Activated CD4-positive, alpha-beta T cell treated with anti-CD3 and anti-CD28 coated beads for 36 hours (primary cell): ENCODE measurements at regions of chr2 and their contacts with region 1.

Region 1: DNA sequence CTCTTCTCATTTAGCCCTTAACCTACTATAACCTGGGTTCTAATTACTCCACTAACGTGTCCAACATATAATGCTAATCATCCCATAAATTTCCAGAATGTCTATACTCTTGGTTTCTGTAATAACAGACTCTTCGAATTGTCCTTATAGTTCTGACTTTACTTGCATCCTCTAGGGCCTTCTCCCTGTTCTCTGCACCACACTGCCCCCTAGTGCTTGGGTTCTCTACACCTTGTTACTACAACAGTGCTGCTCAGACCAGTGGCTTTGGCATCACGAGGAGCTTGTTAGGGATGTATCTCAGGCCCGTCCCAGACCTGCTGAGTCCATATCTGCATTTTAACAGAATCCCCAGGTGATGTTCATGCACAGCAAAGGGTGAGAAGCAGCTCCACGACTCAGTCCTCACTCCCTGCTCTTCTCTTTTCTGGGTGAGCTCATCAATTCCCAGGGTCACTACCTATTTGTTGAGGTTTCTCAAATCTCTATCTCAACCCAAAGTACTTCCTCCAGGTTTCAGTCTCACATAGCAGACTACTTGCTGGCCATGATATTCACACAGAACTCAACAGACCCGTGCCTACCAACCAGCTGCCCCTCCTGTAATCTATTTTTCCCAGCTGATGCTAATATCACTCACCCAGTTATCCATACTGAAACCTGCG is 14.5 kb upstream of the DDX1 start:
- DNase-seq: peak; percentile 96
- ATAC-seq: peak; percentile 99
- H3K4me3 Mint-ChIP-seq: no peak overlapping the region
- H3K27ac Mint-ChIP-seq: no peak overlapping the region
- H3K4me1 Mint-ChIP-seq: no peaks in the 10 kb centered on the region
- H3K27me3 Mint-ChIP-seq: no peaks in the 10 kb centered on the region

Region 2: GRCh38 chr2:14642499-14642898 is 934.7 kb before region 1 on chr2:
- CTCF ChIA-PET with region 1: no interaction called
- POLR2A ChIA-PET with region 1: no interaction called
- intact Hi-C with region 1: loop called in 1 of 2 experiments (anchors 10 kb)
- DNase-seq: no peak
- ATAC-seq: no peak
- H3K4me3 Mint-ChIP-seq: no peak overlapping the region
- H3K27ac Mint-ChIP-seq: no peak overlapping the region
- H3K4me1 Mint-ChIP-seq: no peaks in the 10 kb centered on the region
- H3K27me3 Mint-ChIP-seq: peaks cover 6% of the 10 kb centered on the region

Region 3: DNA sequence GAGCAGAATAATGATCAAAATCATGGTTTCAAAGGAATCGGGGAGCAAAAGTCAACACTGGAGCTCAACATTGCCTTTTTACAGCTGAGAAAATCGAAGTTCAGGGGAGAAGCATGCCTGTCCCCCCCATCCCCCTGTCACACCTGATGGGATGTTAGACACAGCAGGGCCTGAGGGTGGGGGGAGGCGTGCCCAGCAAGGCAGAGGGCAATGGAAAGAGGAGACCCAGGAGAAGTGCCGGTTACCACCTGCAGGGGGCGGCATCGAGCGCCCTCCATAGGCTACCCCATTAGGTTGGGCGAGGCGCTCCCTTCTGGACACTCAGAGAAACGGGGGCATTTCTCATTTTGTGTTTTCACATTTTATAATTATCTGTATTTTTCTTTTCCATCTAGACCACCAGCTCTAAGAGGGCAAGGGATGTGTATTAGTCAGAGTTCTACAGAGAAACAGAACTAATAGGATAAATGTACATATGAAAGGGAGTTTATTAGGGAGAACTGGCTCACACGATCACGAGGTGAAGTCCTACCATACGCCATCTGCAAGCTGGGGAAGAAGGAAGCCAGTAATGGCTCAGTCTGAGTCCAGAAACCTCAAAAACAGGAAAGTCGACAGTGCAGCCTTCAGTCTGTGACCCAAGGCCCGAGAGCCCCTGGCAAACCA is 673.4 kb before region 1 on chr2:
- CTCF ChIA-PET with region 1: no interaction called
- POLR2A ChIA-PET with region 1: no interaction called
- intact Hi-C with region 1: loop called (anchors 1 to 5 kb)
- DNase-seq: peak; percentile 79
- ATAC-seq: peak; percentile 91
- H3K4me3 Mint-ChIP-seq: no peak overlapping the region
- H3K27ac Mint-ChIP-seq: no peak overlapping the region
- H3K4me1 Mint-ChIP-seq: no peaks in the 10 kb centered on the region
- H3K27me3 Mint-ChIP-seq: no peaks in the 10 kb centered on the region

Region 4: DNA sequence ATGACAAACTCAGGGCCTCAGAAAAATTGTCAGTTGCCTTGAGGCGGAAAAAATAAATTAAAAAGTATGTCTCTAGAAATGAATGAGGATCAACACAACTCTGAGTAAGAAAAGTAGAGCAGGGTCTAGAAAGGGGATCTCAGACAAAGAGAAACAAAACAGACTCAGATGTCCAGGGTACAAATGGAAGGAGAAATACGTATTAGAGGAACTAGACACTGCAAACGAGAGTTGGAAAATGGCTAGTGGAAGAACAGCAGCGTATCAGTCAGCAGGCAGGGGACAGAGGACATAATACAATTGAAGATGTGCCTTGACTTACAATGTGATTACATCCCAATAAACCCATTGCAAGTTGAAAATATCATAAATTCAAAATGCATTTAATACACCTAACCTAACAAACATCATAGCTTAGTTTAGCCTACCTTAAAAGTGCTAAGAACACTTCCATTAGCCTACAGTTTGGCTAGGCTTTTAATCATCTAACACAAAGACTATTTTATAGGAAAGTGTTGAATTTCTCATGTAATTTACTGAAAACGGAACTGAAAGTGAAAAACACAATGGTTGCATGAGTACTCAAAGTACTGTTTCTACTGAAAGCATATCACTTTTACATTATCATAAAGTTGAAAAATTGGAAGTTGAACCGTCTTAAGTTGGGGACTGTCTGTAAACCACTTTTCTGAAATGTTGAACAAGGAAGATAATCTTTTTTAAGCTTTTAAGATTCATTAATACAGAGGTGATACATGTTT is 198.9 kb before region 1 on chr2:
- CTCF ChIA-PET with region 1: no interaction called
- POLR2A ChIA-PET with region 1: no interaction called
- intact Hi-C with region 1: loop called in 1 of 2 experiments (anchors 5 kb)
- DNase-seq: no peak
- ATAC-seq: peak; percentile 80
- H3K4me3 Mint-ChIP-seq: no peak overlapping the region
- H3K27ac Mint-ChIP-seq: peak overlapping the region; percentile 72
- H3K4me1 Mint-ChIP-seq: peaks cover 17% of the 10 kb centered on the region
- H3K27me3 Mint-ChIP-seq: no peaks in the 10 kb centered on the region

Region 5: GRCh38 chr2:15546297-15547098 is 30.7 kb before region 1 on chr2:
- CTCF ChIA-PET with region 1: interaction called, 20 read pairs
- POLR2A ChIA-PET with region 1: no interaction called
- intact Hi-C with region 1: no loop called
- DNase-seq: peak; percentile 18
- ATAC-seq: no peak
- H3K4me3 Mint-ChIP-seq: no peak overlapping the region
- H3K27ac Mint-ChIP-seq: no peak overlapping the region
- H3K4me1 Mint-ChIP-seq: peaks cover 4% of the 10 kb centered on the region
- H3K27me3 Mint-ChIP-seq: no peaks in the 10 kb centered on the region

Region 6: GRCh38 chr2:15560988-15561573 is 16.1 kb before region 1 on chr2 and contains the start of gene NBAS:
- CTCF ChIA-PET with region 1: interaction called, 15 read pairs
- POLR2A ChIA-PET with region 1: interaction called, 4 read pairs
- intact Hi-C with region 1: no loop called
- DNase-seq: peak; percentile 90
- ATAC-seq: peak; percentile 80
- H3K4me3 Mint-ChIP-seq: peak within 1 kb of the TSS; percentile 96
- H3K27ac Mint-ChIP-seq: peak within 1 kb of the TSS; percentile 97
- H3K4me1 Mint-ChIP-seq: peaks cover 34% of the 10 kb centered on the region
- H3K27me3 Mint-ChIP-seq: peaks cover 2% of the 10 kb centered on the region
- total RNA-seq, gene NBAS: 38.1 to 44.3 TPM

Region 7: DNA sequence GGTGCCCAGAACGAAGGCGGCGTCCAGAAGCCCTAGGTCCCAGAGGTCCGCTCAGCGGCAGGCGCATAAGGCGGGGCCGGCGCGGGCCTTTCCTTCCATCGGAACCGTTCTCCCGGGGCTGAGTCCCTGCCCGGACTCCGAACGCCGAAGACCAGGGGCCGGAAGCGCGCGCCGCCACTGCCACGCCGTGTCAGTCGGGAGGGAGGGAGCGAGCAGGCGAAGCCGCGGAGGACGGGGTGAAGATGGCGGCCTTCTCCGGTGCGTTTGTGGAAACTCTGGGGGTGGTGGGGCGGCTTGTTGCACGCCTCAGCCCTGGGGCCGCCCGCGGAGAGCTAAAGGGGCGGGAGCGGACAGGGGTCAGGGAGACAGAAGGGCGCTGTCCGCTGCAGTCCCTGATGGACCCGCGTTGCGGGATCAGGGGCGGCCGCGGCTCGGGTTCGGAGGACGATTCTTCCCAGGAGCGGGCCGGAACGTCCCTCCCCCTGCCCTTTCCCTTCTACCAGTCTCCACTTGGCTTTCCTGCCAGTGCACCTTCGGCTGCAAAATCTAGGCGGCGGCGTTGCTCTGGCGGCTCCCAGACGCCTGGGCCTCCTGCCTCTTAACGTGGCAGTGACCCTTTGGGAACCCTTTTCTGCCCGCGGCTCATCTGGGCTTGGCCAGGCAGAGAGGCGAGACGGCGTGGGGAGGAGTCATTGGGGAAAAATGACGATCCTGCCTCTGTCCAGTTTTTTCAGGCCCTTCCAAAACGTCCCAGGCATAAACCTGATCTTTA is 14.7 kb after region 1 on chr2 and contains the start of gene DDX1:
- CTCF ChIA-PET with region 1: interaction called, 24 read pairs
- POLR2A ChIA-PET with region 1: interaction called, 3 read pairs
- intact Hi-C with region 1: no loop called
- DNase-seq: peak; percentile 92
- ATAC-seq: peak; percentile 94
- H3K4me3 Mint-ChIP-seq: peak within 1 kb of the TSS; percentile 90
- H3K27ac Mint-ChIP-seq: peak within 1 kb of the TSS; percentile 98
- H3K4me1 Mint-ChIP-seq: peaks cover 36% of the 10 kb centered on the region
- H3K27me3 Mint-ChIP-seq: no peaks in the 10 kb centered on the region
- total RNA-seq, gene DDX1: 87.6 to 96.2 TPM